Right ventricle myocardium superior (tissue), 1 donor: ENCODE measurements at regions of chr12 and their contacts with region 1.

Region 1: DNA sequence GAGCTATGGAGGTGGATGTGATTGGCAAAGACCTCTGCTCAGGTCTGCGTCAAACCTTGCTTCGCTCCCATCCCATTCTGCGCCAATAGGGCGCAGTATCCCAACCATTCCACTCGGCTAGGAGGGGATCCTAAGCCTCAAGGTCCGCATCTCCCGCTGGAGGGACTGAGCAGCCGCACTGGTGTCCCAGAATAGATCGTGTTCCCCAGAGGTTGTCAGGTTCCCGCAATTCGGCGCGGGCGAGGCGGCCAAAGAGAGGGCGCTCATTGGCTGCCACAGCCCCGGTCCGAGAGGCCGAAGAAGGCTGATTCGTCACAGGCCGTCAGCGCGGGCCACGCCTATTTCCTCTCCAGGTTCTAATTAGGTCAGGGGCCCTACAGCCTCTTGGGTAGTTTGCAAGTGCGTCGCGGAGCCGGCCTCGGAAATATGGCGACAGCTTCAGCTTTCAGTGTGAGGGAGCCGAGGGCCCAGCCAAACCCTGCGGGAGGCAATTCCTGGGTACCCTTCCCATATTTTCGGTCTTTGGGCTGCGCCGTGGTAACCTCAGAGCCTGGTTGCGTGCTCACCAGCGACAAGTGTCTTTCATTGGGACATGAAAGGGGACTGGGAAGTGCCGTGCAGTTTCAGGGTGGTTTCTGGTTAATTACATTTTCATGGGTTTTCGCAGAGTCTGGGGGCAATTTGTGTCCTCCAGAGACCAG is 5.0 kb downstream of the OR10AD1 start:
- DNase-seq: peak; percentile 99
- ATAC-seq: peak; percentile 99

Region 2: GRCh38 chr12:48349471-48349870 is 151.3 kb after region 1 on chr12:
- intact Hi-C with region 1: loop called (anchors 10 kb)
- DNase-seq: peak; percentile 69
- ATAC-seq: no peak